Thyroid gland (tissue), 4 donors: ENCODE measurements at regions of chr17 and their contacts with region 1.

Region 1: DNA sequence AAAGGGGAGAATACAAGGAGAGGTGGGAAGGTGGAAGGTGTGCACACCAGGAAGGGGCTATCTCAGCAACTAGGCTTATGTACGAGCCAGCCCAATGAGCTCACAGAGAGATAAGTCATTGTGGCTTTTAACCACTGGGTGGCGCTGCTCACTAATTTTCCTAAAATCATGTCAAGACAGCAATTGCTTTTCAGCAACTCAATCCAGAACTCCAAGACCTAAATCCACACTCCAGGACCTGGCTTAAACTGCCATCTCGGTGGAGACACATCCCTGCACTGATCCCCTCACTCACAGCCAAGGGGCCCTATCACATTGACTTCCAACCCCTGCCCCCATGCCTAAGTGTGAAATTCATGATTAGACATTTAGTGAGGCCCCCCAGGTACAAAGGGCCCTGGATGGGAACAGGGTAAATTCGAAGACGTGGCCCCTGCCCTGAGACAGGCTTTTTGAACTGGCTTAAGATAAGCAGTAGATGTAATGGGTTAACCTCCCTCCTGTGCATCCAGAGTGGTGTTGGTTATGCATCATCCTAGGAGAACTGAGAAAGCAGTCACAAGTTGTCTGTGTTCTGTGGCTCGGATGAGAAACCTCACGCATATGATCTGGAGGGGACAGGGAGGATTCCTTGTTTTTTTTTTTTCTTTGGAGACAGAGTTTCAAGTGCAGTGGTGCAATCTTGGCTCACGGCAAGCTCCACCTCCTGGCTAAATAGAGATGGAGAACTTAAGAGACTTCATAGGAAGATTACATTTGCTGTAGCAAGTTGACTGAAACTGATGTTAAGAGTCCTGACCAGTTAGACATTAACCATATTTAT is 11.5 kb downstream of the CCL16 start:
- DNase-seq: peak; percentile 73 to 81
- H3K4me3 ChIP-seq: no peak overlapping the region
- H3K27ac ChIP-seq: no peak overlapping the region
- H3K4me1 ChIP-seq: no peaks in the 10 kb centered on the region
- H3K27me3 ChIP-seq: no peaks in the 10 kb centered on the region
- CTCF ChIP-seq: peak; percentile 71 to 82 (median 78)
- POLR2A ChIP-seq: no peak

Region 2: DNA sequence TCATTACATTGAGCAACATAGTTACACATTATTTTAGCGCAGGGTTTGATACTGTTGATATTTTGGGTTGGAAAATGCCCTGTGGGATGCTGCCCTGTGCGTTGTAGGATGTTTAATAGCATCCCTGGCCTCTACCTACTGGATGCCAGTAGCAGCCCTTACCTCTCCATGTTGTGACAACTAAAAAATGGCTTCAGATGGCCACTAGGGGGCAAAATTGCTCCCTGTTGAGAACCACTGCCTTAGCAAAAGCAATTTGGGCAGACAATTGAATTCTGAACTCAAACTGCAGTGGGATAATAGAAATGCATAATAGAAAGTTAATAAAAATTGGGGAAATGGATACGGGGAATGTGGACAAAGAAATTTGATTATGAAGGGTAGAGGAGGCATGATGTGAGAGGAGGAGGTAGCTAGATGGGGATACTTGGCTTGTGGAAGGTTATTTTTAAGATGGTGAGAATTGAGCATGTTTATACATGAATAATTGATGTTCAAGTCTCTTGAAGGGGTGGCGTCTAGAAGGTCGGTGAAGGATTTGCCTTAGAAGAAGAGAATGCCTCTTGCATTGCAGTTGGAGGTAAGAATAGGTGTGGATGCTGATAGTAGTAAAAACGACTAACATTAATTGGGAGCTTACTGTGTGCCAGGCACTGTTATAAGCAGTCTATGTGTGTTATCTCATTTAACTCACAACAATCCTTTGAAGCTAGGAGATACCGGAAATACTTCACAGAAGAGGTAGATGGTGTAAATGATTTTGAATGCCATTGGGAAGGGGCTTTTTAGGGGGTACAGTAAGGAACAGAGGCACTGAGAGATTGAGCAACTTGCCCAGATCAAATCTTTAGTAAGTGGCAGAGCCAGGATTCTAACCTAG is 120.1 kb before region 1 on chr17:
- intact Hi-C with region 1: no loop called
- DNase-seq: peak; percentile 13 to 34
- H3K4me3 ChIP-seq: no peak overlapping the region
- H3K27ac ChIP-seq: no peak overlapping the region
- H3K4me1 ChIP-seq: no peaks in the 10 kb centered on the region
- H3K27me3 ChIP-seq: no peaks in the 10 kb centered on the region
- CTCF ChIP-seq: peak; percentile 32 to 69 (median 45)
- POLR2A ChIP-seq: no peak

Region 3: DNA sequence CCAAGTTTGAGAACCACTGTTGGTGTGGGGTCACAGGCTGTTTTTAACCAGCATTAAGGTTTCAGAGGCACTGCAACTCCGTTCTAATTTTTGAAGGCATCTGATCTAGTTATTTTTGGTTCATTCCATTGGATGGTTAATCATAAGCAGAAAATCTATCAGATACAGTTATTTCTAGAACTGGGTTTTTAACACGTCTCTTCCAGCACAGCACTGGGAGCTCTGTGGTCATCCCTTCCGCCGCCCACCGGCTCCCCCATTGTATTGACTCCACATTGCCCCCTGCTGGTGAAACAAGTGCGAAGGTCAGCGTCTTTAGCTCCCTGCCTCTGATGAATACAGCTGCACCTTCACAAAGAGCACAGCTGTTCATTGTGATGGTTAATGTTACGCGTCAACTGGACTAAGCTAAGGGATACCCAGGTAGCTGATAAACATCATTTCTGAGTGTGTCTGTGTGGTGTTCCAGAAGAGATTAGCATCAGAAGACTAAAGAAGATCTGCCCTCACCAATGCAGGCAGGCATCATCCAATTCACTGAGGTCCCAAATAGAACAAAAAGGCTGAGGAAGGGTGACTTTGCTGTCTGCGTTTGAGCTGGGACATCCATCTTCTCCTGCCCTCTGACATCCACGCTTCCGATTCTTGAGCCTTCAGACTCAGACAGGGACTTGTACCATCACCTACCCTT is 102.8 kb after region 1 on chr17:
- intact Hi-C with region 1: loop called (anchors 5 kb)
- DNase-seq: peak; percentile 30 to 44
- H3K4me3 ChIP-seq: no peak overlapping the region
- H3K27ac ChIP-seq: no peak overlapping the region
- H3K4me1 ChIP-seq: no peaks in the 10 kb centered on the region
- H3K27me3 ChIP-seq: no peaks in the 10 kb centered on the region
- CTCF ChIP-seq: peak in 4 of 6 experiments; percentile 33 to 60 (median 41)
- POLR2A ChIP-seq: no peak

Region 4: DNA sequence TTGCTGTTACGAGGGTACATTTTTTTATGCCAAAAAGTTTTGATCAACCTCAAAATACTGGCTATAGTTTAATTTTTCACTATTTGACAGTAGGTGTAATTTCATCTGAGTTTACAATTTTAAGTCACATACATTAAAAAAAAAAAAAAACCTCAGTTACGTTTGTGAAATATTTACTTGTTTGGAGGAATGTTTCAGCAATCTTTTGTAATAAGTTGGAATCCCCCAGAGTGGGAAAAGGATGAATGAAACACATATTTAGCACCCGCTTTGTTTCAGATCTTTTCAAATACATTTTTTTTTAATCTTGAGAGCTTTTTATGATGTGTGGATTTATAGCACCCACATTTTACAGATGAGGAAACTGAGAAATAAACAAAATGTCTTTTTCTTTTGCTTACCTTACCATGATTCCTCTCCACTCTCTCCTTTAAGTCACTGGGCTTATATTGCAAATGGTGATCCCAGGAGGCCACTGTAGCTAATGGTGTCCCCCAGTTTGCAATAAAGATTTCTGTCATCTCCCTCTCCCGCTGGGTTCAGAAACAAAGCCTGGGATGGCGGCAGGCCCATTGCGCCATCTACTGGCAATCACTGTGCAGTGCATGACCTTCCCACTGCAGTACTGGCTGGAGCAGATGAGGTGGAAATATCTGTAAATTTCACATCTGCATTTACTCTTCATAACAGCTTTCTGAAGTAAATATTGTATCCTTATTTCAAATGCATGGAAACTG is 179.0 kb after region 1 on chr17:
- intact Hi-C with region 1: loop called (anchors 5 kb)
- DNase-seq: peak; percentile 60 to 66
- H3K4me3 ChIP-seq: no peak overlapping the region
- H3K27ac ChIP-seq: no peak overlapping the region
- H3K4me1 ChIP-seq: no peaks in the 10 kb centered on the region
- H3K27me3 ChIP-seq: peaks cover 6% of the 10 kb centered on the region
- CTCF ChIP-seq: peak; percentile 79 to 100 (median 88)
- POLR2A ChIP-seq: no peak